OCI-LY7 (cell line): ENCODE measurements at regions of chr17 and their contacts with region 1.

Region 1: GRCh38 chr17:75412455-75413317 is 7.2 kb upstream of the GRB2 start:
- DNase-seq: peak; percentile 95
- H3K4me3 ChIP-seq: peak overlapping the region; percentile 50
- H3K27ac ChIP-seq: peak overlapping the region; percentile 60
- H3K4me1 ChIP-seq: peaks cover 54% of the 10 kb centered on the region
- CTCF ChIP-seq: peak; percentile 97

Region 2: GRCh38 chr17:75046582-75047289 is 365.9 kb before region 1 on chr17 and contains the starts of genes ATP5PD and KCTD2:
- CTCF ChIA-PET with region 1: no interaction called
- POLR2A ChIA-PET with region 1: no interaction called
- intact Hi-C with region 1: loop called (anchors 10 kb)
- DNase-seq: peak; percentile 99
- H3K4me3 ChIP-seq: peak within 1 kb of the TSS; percentile 75
- H3K27ac ChIP-seq: peak within 1 kb of the TSS; percentile 43
- H3K4me1 ChIP-seq: peaks cover 14% of the 10 kb centered on the region
- CTCF ChIP-seq: 0 out of 2 replicates have a peak, but pooled peaks have one; percentile 15
- total RNA-seq, gene ATP5PD: 293 and 301 TPM in 2 replicates
- total RNA-seq, gene KCTD2: 26.0 and 29.8 TPM in 2 replicates

Region 3: GRCh38 chr17:75238684-75239191 is 173.9 kb before region 1 on chr17:
- CTCF ChIA-PET with region 1: interaction called, 4 read pairs
- POLR2A ChIA-PET with region 1: interaction called, 3 read pairs
- intact Hi-C with region 1: loop called (anchors 1 kb)
- DNase-seq: peak; percentile 89
- H3K4me3 ChIP-seq: no peak overlapping the region
- H3K27ac ChIP-seq: peak overlapping the region; percentile 15
- H3K4me1 ChIP-seq: peaks cover 27% of the 10 kb centered on the region
- CTCF ChIP-seq: peak; percentile 99

Region 4: GRCh38 chr17:75244133-75244866 is 168.4 kb before region 1 on chr17:
- CTCF ChIA-PET with region 1: interaction called, 4 read pairs
- POLR2A ChIA-PET with region 1: interaction called, 7 read pairs
- intact Hi-C with region 1: loop called (anchors 1 kb)
- DNase-seq: peak; percentile 94
- H3K4me3 ChIP-seq: peak overlapping the region; percentile 38
- H3K27ac ChIP-seq: peak overlapping the region; percentile 75
- H3K4me1 ChIP-seq: peaks cover 58% of the 10 kb centered on the region
- CTCF ChIP-seq: no peak

Region 5: GRCh38 chr17:75261336-75262111 is 151.2 kb before region 1 on chr17 and contains the starts of genes GGA3 and MRPS7:
- CTCF ChIA-PET with region 1: interaction called, 3 read pairs
- POLR2A ChIA-PET with region 1: interaction called, 16 read pairs
- intact Hi-C with region 1: loop called (anchors 2 kb)
- DNase-seq: peak; percentile 99
- H3K4me3 ChIP-seq: peak within 1 kb of the TSS; percentile 79
- H3K27ac ChIP-seq: peak within 1 kb of the TSS; percentile 68
- H3K4me1 ChIP-seq: peaks cover 26% of the 10 kb centered on the region
- CTCF ChIP-seq: no peak; the same call in none of the 2 replicates
- total RNA-seq, gene GGA3: 52.3 and 77.6 TPM in 2 replicates
- total RNA-seq, gene MRPS7: 123 and 127 TPM in 2 replicates

Region 6: DNA sequence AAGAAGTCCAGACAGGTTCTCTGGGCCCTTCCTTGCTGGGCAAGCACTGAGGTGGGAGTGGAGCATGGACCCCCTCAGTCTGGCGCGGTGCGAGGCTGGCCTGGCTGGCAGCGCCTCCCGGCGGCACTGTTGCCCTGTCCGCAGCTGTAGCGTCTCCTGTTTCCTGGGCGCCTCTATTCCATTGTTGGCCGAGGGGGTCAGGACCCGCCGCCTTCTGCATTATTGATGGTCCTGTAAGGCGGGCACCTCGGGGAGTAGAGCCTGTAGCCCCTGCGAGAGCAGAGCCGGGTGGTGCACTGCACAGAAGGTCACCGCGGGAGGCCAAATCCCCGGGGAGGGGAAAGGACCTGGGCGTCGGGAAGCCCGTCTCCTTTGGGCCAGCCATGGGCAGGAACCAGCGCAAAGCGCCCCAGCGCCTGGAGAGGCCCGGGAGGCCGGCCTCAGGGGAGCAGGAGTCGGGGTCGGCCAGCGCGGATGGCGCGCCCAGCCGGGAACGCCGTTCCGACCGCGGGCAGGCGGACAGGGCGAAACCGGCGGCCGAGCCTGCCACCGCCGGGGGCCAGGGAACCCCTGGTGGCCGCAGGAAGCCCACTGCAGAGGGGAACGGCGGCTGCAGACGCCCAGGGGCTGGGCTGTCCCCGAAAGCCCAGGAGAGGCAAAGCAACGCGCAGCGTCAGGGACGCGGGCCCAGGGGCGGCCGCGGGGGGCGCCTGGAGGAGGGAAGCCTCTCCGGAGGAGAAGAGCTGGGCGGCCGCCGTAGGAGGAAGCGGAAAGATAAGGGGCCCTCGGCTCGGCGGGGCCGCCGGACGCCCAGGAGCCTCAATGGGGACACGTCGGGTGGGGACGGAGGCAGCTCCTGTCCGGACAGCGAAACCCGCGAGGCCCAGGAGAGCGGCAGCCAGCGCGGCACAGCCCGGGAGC is 175.2 kb after region 1 on chr17 and contains the start of gene MYO15B:
- CTCF ChIA-PET with region 1: no interaction called
- POLR2A ChIA-PET with region 1: no interaction called
- intact Hi-C with region 1: no loop called
- DNase-seq: no peak
- H3K4me3 ChIP-seq: no peak within 1 kb of the TSS
- H3K27ac ChIP-seq: no peak within 1 kb of the TSS
- H3K4me1 ChIP-seq: peaks cover 35% of the 10 kb centered on the region
- CTCF ChIP-seq: peak; percentile 42
- total RNA-seq, gene MYO15B: 8.9 and 9.7 TPM in 2 replicates